PC-9 (cell line): ENCODE measurements at regions of chr4 and their contacts with region 1.

Region 1: GRCh38 chr4:23135792-23136645 is 443.3 kb downstream of the GBA3 start:
- DNase-seq: no peak
- H3K4me3 ChIP-seq: no peak overlapping the region
- H3K27ac ChIP-seq: no peak overlapping the region
- H3K4me1 ChIP-seq: no peaks in the 10 kb centered on the region
- H3K27me3 ChIP-seq: no peaks in the 10 kb centered on the region
- CTCF ChIP-seq: peak; percentile 89

Region 2: DNA sequence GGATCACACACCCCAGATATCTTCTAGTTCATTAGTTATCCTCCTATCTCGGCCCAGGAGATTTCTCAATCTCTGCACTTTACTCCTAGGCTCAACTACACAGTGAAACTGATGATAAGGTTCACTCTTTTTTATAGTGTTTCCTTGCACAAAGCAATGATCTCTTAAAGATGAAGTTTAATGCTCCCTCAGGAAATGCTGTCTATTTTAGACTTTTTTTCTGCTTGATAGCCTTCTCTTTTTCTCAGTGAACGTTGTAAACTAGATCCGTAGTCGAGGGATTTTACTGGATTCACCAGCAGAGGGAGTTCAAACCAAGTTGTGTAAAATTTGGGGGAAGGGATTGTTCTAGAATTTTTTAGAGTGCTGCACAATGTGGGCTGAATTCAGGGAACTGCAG is 173.7 kb before region 1 on chr4:
- CTCF ChIA-PET with region 1: no interaction called
- POLR2A ChIA-PET with region 1: no interaction called
- intact Hi-C with region 1: loop called (anchors 10 kb)
- DNase-seq: peak in 1 of 2 experiments; percentile 15
- H3K4me3 ChIP-seq: no peak overlapping the region
- H3K27ac ChIP-seq: no peak overlapping the region
- H3K4me1 ChIP-seq: no peaks in the 10 kb centered on the region
- H3K27me3 ChIP-seq: no peaks in the 10 kb centered on the region
- CTCF ChIP-seq: peak; percentile 59

Region 3: GRCh38 chr4:23290656-23291055 is 154.6 kb after region 1 on chr4:
- CTCF ChIA-PET with region 1: no interaction called
- POLR2A ChIA-PET with region 1: no interaction called
- intact Hi-C with region 1: no loop called
- DNase-seq: peak; percentile 50 to 78
- H3K4me3 ChIP-seq: no peak overlapping the region
- H3K27ac ChIP-seq: peak overlapping the region; percentile 93
- H3K4me1 ChIP-seq: peaks cover 22% of the 10 kb centered on the region
- H3K27me3 ChIP-seq: no peaks in the 10 kb centered on the region
- CTCF ChIP-seq: no peak

Region 4: GRCh38 chr4:23333946-23334878 is 198.2 kb after region 1 on chr4:
- CTCF ChIA-PET with region 1: no interaction called
- POLR2A ChIA-PET with region 1: no interaction called
- intact Hi-C with region 1: loop called (anchors 5 kb)
- DNase-seq: peak; percentile 22 to 75
- H3K4me3 ChIP-seq: no peak overlapping the region
- H3K27ac ChIP-seq: peak overlapping the region; percentile 1; the same call in 1 of the 2 replicates
- H3K4me1 ChIP-seq: peaks cover 9% of the 10 kb centered on the region
- H3K27me3 ChIP-seq: no peaks in the 10 kb centered on the region
- CTCF ChIP-seq: no peak

Region 5: GRCh38 chr4:23614284-23614892 is 478.4 kb after region 1 on chr4:
- CTCF ChIA-PET with region 1: no interaction called
- POLR2A ChIA-PET with region 1: no interaction called
- intact Hi-C with region 1: loop called (anchors 10 kb)
- DNase-seq: no peak
- H3K4me3 ChIP-seq: no peak overlapping the region
- H3K27ac ChIP-seq: no peak overlapping the region
- H3K4me1 ChIP-seq: no peaks in the 10 kb centered on the region
- H3K27me3 ChIP-seq: no peaks in the 10 kb centered on the region
- CTCF ChIP-seq: peak; percentile 50